Breast epithelium (tissue), 4 donors: ENCODE measurements at regions of chr4 and their contacts with region 1.

Region 1: GRCh38 chr4:117400039-117400835 is 314.9 kb upstream of the TRAM1L1 start:
- DNase-seq: no peak
- H3K4me3 ChIP-seq: no peak overlapping the region
- H3K27ac ChIP-seq: no peak overlapping the region
- H3K4me1 ChIP-seq: no peaks in the 10 kb centered on the region
- H3K27me3 ChIP-seq: no peaks in the 10 kb centered on the region
- CTCF ChIP-seq: no peak
- POLR2A ChIP-seq: no peak

Region 2: GRCh38 chr4:115918149-115918548 is 1482.1 kb before region 1 on chr4:
- intact Hi-C with region 1: no loop called
- DNase-seq: no peak
- H3K4me3 ChIP-seq: no peak overlapping the region
- H3K27ac ChIP-seq: no peak overlapping the region
- H3K4me1 ChIP-seq: no peaks in the 10 kb centered on the region
- H3K27me3 ChIP-seq: no peaks in the 10 kb centered on the region
- CTCF ChIP-seq: no peak
- POLR2A ChIP-seq: no peak

Region 3: GRCh38 chr4:116599859-116600258 is 800.4 kb before region 1 on chr4:
- intact Hi-C with region 1: loop called (anchors 5 kb)
- DNase-seq: no peak
- H3K4me3 ChIP-seq: no peak overlapping the region
- H3K27ac ChIP-seq: no peak overlapping the region
- H3K4me1 ChIP-seq: no peaks in the 10 kb centered on the region
- H3K27me3 ChIP-seq: no peaks in the 10 kb centered on the region
- CTCF ChIP-seq: no peak
- POLR2A ChIP-seq: no peak